Endothelial cell of umbilical vein (primary cell): ENCODE measurements at regions of chr20 and their contacts with region 1.

Region 1: GRCh38 chr20:56358596-56359211 is at the start of gene FAM210B:
- DNase-seq: peak; percentile 81
- H3K4me3 ChIP-seq: peak within 1 kb of the TSS; percentile 62 to 92 (median 73)
- H3K27ac ChIP-seq: peak within 1 kb of the TSS; percentile 59
- H3K4me1 ChIP-seq: peaks cover 6% of the 10 kb centered on the region
- H3K27me3 ChIP-seq: peaks cover 3 to 4% of the 10 kb centered on the region in 2 experiments
- CTCF ChIP-seq: no peak
- POLR2A ChIP-seq: no peak
- total RNA-seq, gene FAM210B: 37.6 and 44.5 TPM in 2 replicates

Region 2: DNA sequence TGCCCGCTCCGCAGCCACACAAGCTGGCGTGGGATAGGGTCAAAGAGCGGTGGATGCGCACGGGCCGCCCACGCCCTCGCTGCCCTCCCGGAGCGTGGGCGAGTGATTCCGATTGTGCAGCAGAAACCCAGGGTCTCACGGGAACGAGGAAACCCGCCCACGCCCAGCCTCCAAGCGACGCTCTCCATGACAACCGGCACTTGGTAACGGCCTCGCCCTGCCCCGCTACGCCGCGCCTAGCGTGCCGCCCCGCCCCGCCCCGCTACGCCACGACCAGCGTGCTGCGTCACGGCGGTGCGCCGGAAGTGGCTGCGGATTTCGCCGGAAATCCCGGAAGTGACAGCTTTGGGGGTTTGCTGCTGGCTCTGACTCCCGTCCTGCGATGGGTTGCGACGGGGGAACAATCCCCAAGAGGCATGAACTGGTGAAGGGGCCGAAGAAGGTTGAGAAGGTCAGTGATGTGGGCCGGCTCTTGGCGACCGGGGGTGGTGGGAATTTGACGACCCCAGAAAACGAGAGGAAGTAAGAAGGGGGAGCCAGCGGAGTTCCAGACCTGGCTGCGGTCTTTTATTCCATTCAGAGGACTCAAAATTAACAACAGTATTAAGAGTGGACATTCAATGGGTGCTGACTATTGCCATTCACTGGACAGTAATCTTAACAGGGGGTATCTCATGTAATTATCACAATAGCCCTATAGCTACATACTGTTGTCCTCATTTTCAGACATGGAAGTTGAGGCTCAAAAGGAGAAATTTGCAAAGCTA is 109.8 kb after region 1 on chr20 and contains the start of gene RTF2:
- CTCF ChIA-PET with region 1: no interaction called
- POLR2A ChIA-PET with region 1: no interaction called
- dilution Hi-C with region 1: no loop called
- intact Hi-C with region 1: loop called (anchors 1 kb)
- DNase-seq: peak; percentile 95
- H3K4me3 ChIP-seq: peak within 1 kb of the TSS; percentile 83 to 95 (median 92)
- H3K27ac ChIP-seq: peak within 1 kb of the TSS; percentile 87
- H3K4me1 ChIP-seq: peaks cover 7% of the 10 kb centered on the region
- H3K27me3 ChIP-seq: peaks cover 0 to 3% of the 10 kb centered on the region in 2 experiments
- CTCF ChIP-seq: no peak
- POLR2A ChIP-seq: peak; percentile 78
- total RNA-seq, gene RTF2: 82.2 and 84.7 TPM in 2 replicates